ENCODE measurements at regions of chr15 and their contacts with region 1.

Region 1: GRCh38 chr15:57732526-57733331 is 26.2 kb downstream of the POLR2M start:
- DNase-seq: peak; percentile 46 to 64
- ATAC-seq: peak; percentile 81 to 93
- H3K4me3 ChIP-seq: no peak overlapping the region
- H3K27ac ChIP-seq: no peak overlapping the region
- H3K4me1 ChIP-seq: no peaks in the 10 kb centered on the region
- CTCF ChIP-seq: peak; percentile 94
- EP300 ChIP-seq: no peak
- POLR2A ChIP-seq: no peak
- RAD21 ChIP-seq: peak; percentile 57 to 61

Region 2: DNA sequence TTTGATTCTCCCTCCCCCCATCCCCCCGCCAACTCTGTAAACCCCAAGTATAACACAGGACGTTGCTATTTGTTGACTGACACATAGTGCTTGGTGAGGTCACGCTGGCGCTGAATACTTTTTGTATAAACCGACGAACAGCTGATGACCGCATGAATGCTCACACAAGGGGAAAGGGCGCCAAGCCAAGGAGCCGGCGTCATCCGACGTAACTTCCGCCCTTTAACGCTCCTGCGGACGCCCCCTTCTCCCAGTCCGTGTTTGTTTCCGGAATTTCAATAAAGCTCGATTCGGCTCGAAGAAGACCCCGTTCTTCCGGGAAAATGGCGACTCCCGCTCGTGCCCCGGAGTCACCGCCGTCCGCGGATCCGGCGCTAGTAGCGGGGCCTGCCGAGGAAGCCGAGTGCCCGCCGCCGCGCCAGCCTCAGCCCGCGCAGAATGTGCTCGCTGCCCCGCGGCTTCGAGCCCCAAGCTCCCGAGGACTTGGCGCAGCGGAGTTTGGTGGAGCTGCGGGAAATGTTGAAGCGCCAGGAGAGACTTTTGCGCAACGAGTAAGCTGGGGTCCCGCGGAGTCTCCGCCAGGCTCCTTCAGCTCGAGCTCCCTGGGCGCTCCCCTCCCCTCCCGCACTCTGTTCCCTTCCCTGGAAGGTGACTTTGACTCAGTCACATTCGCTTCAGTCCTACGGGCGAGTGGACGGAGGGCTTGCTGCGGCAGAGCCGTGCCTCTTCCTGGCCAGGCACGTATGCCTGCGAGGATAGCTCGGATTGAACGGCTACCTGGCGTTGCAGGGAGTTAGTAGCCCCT is 26.1 kb before region 1 on chr15 and contains the start of gene POLR2M:
- CTCF ChIA-PET with region 1: interaction called, 20 read pairs
- POLR2A ChIA-PET with region 1: interaction called, 7 read pairs
- DNase-seq: peak; percentile 92 to 97
- ATAC-seq: peak; percentile 94 to 96
- H3K4me3 ChIP-seq: peak within 1 kb of the TSS; percentile 80
- H3K27ac ChIP-seq: peak within 1 kb of the TSS; percentile 98
- H3K4me1 ChIP-seq: peaks cover 11% of the 10 kb centered on the region; the same call in 2 of the 3 replicates
- CTCF ChIP-seq: no peak
- EP300 ChIP-seq: no peak
- POLR2A ChIP-seq: peak; percentile 70
- RAD21 ChIP-seq: 0 out of 5 replicates have a peak, but pooled peaks of 1 of the 2 experiments have one; percentile 2
- polyA plus RNA-seq, gene POLR2M: 99.6 and 107 TPM in 2 replicates

Region 3: GRCh38 chr15:57720867-57721266 is 11.9 kb before region 1 on chr15:
- CTCF ChIA-PET with region 1: interaction called, 36 read pairs
- POLR2A ChIA-PET with region 1: no interaction called
- DNase-seq: no peak
- ATAC-seq: no peak
- H3K4me3 ChIP-seq: no peak overlapping the region
- H3K27ac ChIP-seq: no peak overlapping the region
- H3K4me1 ChIP-seq: no peaks in the 10 kb centered on the region
- CTCF ChIP-seq: no peak
- EP300 ChIP-seq: no peak
- POLR2A ChIP-seq: no peak
- RAD21 ChIP-seq: no peak

Region 4: GRCh38 chr15:57751177-57751800 is 18.6 kb after region 1 on chr15:
- CTCF ChIA-PET with region 1: interaction called, 197 read pairs
- POLR2A ChIA-PET with region 1: no interaction called
- DNase-seq: peak; percentile 29 to 50
- ATAC-seq: peak; percentile 65 to 85; a peak in 4 of 6 replicates
- H3K4me3 ChIP-seq: no peak overlapping the region
- H3K27ac ChIP-seq: no peak overlapping the region
- H3K4me1 ChIP-seq: no peaks in the 10 kb centered on the region
- CTCF ChIP-seq: peak; percentile 63
- EP300 ChIP-seq: no peak
- POLR2A ChIP-seq: no peak
- RAD21 ChIP-seq: peak; percentile 71 to 76

Region 5: DNA sequence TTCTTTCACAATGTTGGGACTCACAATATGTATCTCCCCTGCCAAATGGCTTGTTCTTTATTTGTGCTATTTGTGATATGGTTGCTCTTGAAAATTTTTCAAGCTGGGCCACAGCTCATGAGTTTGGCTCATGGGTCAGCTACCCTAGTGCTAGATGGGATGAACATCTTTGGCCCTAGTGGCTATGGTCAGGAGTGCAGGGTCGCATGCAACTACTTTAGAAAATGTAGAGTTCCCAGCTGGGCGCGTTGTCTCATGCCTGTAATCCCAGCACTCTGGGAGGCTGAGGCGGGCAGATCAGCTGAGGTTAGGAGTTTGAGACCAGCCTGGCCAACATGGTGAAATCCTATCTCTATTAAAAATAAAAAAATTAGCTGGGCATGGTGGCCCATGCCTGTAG is 29.6 kb after region 1 on chr15:
- CTCF ChIA-PET with region 1: interaction called, 18 read pairs
- POLR2A ChIA-PET with region 1: no interaction called
- DNase-seq: no peak
- ATAC-seq: peak in 1 of 2 experiments; percentile 72; a peak in 3 of 6 replicates
- H3K4me3 ChIP-seq: no peak overlapping the region
- H3K27ac ChIP-seq: no peak overlapping the region
- H3K4me1 ChIP-seq: no peaks in the 10 kb centered on the region
- CTCF ChIP-seq: no peak
- EP300 ChIP-seq: no peak
- POLR2A ChIP-seq: no peak
- RAD21 ChIP-seq: no peak

Region 6: DNA sequence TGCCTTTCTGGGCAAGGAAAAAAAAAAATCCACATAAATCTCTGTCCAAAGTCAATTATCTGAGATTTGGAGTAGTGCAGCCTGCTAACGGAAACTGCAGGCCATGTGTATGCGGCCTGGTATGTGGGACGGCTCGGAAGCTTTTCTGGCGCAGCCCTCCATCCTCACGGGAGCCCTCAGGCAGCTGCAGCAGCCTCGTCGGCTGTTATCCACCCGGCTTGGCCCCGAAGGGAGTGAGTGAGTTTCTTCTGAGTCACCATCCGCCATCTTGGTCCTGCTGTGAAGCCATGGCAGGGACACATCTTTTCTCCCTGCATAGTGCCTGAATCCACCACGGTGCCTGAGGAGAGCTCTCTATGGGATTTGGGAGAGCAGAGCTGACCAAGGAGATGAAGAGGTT is 36.5 kb after region 1 on chr15:
- CTCF ChIA-PET with region 1: interaction called, 11 read pairs
- POLR2A ChIA-PET with region 1: no interaction called
- DNase-seq: no peak
- ATAC-seq: no peak
- H3K4me3 ChIP-seq: no peak overlapping the region
- H3K27ac ChIP-seq: no peak overlapping the region
- H3K4me1 ChIP-seq: no peaks in the 10 kb centered on the region
- CTCF ChIP-seq: no peak
- EP300 ChIP-seq: no peak
- POLR2A ChIP-seq: no peak
- RAD21 ChIP-seq: no peak

Region 7: DNA sequence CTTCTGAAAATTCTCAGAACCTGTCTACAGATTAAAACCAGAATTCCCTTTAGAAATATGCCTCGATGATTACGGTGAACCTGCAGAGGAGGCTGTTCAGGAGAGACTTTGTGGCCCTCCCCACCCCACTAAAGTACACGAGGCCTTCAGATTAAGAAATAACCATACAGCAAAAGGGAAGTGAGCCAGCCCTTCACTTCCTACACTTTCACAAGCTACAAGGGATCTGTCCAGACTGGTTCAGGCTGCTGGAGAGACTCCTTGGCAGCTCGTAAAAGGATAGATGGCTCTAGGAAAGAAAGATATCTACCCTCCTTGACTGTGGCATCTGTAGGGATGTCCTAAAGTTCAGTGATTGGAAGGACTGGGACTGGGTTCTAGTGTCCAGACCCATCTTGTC is 230.2 kb after region 1 on chr15:
- CTCF ChIA-PET with region 1: no interaction called
- POLR2A ChIA-PET with region 1: no interaction called
- DNase-seq: no peak
- ATAC-seq: no peak
- H3K4me3 ChIP-seq: no peak overlapping the region
- H3K27ac ChIP-seq: no peak overlapping the region
- H3K4me1 ChIP-seq: no peaks in the 10 kb centered on the region
- CTCF ChIP-seq: no peak
- EP300 ChIP-seq: no peak
- POLR2A ChIP-seq: no peak
- RAD21 ChIP-seq: no peak